Endothelial cell of umbilical vein (primary cell): ENCODE measurements at regions of chr3 and their contacts with region 1.

Region 1: GRCh38 chr3:56303487-56303886 is 164.8 kb downstream of the ERC2 start:
- DNase-seq: peak; percentile 91
- H3K4me3 ChIP-seq: no peak overlapping the region
- H3K27ac ChIP-seq: no peak overlapping the region
- H3K4me1 ChIP-seq: peaks cover 9% of the 10 kb centered on the region
- H3K27me3 ChIP-seq: no peaks in the 10 kb centered on the region
- CTCF ChIP-seq: peak; percentile 70 to 81
- POLR2A ChIP-seq: no peak

Region 2: DNA sequence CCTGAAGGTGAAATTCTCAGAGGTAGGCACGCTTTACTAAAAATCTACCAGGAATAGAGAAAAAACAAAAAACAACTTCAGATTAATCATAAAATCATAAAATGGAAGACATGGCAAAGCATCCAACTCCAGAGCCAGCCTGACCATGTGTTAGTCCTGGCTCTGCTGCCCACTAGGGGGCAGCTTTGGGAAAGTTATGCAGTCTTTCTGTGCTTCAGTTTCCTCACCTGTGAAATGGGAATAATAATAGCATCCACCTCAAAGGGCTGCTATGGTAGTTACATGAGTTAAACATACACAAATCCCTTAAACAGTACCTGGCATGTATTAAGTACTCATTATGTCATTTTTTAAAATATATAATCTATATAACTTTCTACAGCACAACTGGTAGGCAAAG is 868.7 kb before region 1 on chr3:
- CTCF ChIA-PET with region 1: no interaction called
- POLR2A ChIA-PET with region 1: no interaction called
- dilution Hi-C with region 1: no loop called
- intact Hi-C with region 1: loop called (anchors 1 kb)
- DNase-seq: no peak
- H3K4me3 ChIP-seq: no peak overlapping the region
- H3K27ac ChIP-seq: no peak overlapping the region
- H3K4me1 ChIP-seq: no peaks in the 10 kb centered on the region
- H3K27me3 ChIP-seq: no peaks in the 10 kb centered on the region
- CTCF ChIP-seq: peak; percentile 40 to 46
- POLR2A ChIP-seq: no peak

Region 3: GRCh38 chr3:56260262-56260661 is 43.2 kb before region 1 on chr3:
- CTCF ChIA-PET with region 1: interaction called, 18 read pairs
- POLR2A ChIA-PET with region 1: no interaction called
- dilution Hi-C with region 1: no loop called
- intact Hi-C with region 1: loop called (anchors 1 kb)
- DNase-seq: no peak
- H3K4me3 ChIP-seq: no peak overlapping the region
- H3K27ac ChIP-seq: no peak overlapping the region
- H3K4me1 ChIP-seq: no peaks in the 10 kb centered on the region
- H3K27me3 ChIP-seq: no peaks in the 10 kb centered on the region
- CTCF ChIP-seq: no peak
- POLR2A ChIP-seq: no peak

Region 4: GRCh38 chr3:56291244-56291680 is 12.2 kb before region 1 on chr3:
- CTCF ChIA-PET with region 1: interaction called, 40 read pairs
- POLR2A ChIA-PET with region 1: interaction called, 3 read pairs
- dilution Hi-C with region 1: no loop called
- intact Hi-C with region 1: no loop called
- DNase-seq: peak; percentile 98
- H3K4me3 ChIP-seq: no peak overlapping the region
- H3K27ac ChIP-seq: peak overlapping the region; percentile 90
- H3K4me1 ChIP-seq: peaks cover 24% of the 10 kb centered on the region
- H3K27me3 ChIP-seq: no peaks in the 10 kb centered on the region
- CTCF ChIP-seq: no peak
- POLR2A ChIP-seq: no peak

Region 5: GRCh38 chr3:56370991-56371775 is 67.7 kb after region 1 on chr3:
- CTCF ChIA-PET with region 1: no interaction called
- POLR2A ChIA-PET with region 1: no interaction called
- dilution Hi-C with region 1: no loop called
- intact Hi-C with region 1: no loop called
- DNase-seq: no peak
- H3K4me3 ChIP-seq: no peak overlapping the region
- H3K27ac ChIP-seq: no peak overlapping the region
- H3K4me1 ChIP-seq: no peaks in the 10 kb centered on the region
- H3K27me3 ChIP-seq: no peaks in the 10 kb centered on the region
- CTCF ChIP-seq: no peak
- POLR2A ChIP-seq: no peak